CD8-positive, alpha-beta T cell (primary cell): ENCODE measurements at regions of chr12 and their contacts with region 1.

Region 1: DNA sequence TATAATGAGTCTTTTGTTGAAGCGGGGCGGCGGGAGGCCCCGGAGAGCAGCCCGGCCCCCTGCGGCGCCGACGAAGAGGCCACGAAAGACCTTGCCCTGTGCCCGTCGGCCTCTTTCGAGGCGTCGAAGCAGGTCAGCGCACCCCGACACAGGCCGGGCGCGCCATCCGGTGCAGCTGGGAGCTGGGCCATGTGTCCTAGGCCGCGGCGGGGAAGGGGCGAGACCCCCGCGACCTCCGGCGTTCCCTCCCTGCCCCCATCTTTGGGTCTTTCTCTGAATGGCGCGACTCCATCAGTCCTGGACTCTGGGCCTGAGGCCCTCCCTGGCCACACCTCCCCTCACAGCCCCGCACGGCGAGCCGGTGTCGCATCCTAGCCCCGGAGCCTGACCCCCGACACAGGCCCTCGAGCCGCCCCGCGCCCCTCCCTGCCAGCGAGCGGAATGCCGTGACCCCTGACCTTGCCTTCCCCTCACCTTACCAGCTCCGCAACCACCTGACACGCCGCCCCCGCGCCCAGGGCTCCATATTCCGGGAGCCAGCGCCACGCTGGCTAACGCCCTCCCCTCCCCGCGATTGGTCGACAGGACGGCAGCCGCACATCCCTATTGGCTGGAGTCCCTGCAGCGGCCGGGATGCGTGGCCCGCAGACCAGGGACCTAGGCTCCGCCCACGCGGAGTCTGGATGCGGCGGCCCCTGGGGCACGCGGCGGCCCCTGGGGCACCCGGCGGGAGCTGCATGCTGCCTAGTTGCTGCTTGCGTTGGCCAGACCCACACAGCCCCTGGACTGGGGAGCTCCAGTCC is at the start of gene SLC11A2:
- DNase-seq: peak; percentile 75 to 96 (median 90)
- ATAC-seq: peak; percentile 90
- H3K4me3 ChIP-seq: peak within 1 kb of the TSS; percentile 76 to 83
- H3K4me3 Mint-ChIP-seq: peak within 1 kb of the TSS; percentile 98
- H3K27ac ChIP-seq: peak within 1 kb of the TSS; percentile 72 to 80
- H3K27ac Mint-ChIP-seq: peak within 1 kb of the TSS; percentile 99
- H3K4me1 ChIP-seq: peaks cover 41% of the 10 kb centered on the region
- H3K4me1 Mint-ChIP-seq: peaks cover 56% of the 10 kb centered on the region
- H3K27me3 ChIP-seq: no peaks in the 10 kb centered on the region
- H3K27me3 Mint-ChIP-seq: no peaks in the 10 kb centered on the region
- CTCF ChIP-seq: no peak
- total RNA-seq, gene SLC11A2: 35.1 to 43.1 TPM

Region 2: DNA sequence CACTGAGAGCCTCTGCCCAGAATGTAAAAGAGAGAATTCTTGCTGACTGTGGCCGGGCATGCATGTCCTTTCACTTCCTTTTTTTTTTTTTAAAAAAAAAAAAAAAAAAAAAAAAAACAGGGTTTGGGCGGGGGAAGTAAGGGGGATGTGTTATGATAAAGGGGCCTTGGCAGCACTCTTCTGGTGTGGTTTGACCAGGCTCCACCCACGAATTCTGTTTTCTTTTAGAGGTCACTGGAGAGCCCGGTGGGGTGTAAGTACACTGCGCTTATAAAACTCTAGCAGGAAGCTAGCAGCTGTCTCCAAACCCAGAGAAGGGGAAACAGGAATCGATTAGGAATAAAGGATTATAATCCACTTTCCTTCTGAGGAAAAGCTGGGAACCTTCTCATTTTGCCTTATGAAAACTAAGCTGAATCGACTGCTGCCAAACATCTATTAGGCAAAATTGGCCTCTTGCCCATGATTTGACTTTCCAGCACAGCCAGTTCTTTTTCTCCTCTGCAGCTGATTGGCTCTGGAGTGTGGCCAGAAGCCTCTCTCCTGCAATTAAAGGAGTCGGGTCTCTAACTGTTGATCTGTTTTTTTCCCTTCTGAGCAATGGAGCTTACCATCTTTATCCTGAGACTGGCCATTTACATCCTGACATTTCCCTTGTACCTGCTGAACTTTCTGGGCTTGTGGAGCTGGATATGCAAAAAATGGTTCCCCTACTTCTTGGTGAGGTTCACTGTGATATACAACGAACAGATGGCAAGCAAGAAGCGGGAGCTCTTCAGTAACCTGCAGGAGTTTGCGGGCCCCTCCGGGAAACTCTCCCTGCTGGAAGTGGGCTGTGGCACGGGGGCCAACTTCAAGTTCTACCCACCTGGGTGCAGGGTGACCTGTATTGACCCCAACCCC is 101.3 kb before region 1 on chr12:
- CTCF ChIA-PET with region 1: no interaction called
- POLR2A ChIA-PET with region 1: interaction called, 6 read pairs
- intact Hi-C with region 1: loop called in 1 of 2 experiments (anchors 1 kb)
- DNase-seq: peak in 8 of 9 experiments; percentile 16 to 80 (median 44)
- ATAC-seq: peak; percentile 83
- H3K4me3 ChIP-seq: peak overlapping the region; percentile 46 to 55
- H3K4me3 Mint-ChIP-seq: peak overlapping the region; percentile 82
- H3K27ac ChIP-seq: peak overlapping the region in 1 of 2 experiments; percentile 47
- H3K27ac Mint-ChIP-seq: peak overlapping the region; percentile 77
- H3K4me1 ChIP-seq: peaks cover 37% of the 10 kb centered on the region
- H3K4me1 Mint-ChIP-seq: peaks cover 50% of the 10 kb centered on the region
- H3K27me3 ChIP-seq: no peaks in the 10 kb centered on the region
- H3K27me3 Mint-ChIP-seq: no peaks in the 10 kb centered on the region
- CTCF ChIP-seq: no peak

Region 3: GRCh38 chr12:51009056-51009440 is 17.0 kb before region 1 on chr12:
- CTCF ChIA-PET with region 1: interaction called, 25 read pairs
- POLR2A ChIA-PET with region 1: interaction called, 7 read pairs
- intact Hi-C with region 1: loop called (anchors 1 kb)
- DNase-seq: peak; percentile 16 to 76 (median 64)
- ATAC-seq: peak; percentile 99
- H3K4me3 ChIP-seq: peak overlapping the region; percentile 3 to 25
- H3K4me3 Mint-ChIP-seq: peak overlapping the region; percentile 64
- H3K27ac ChIP-seq: peak overlapping the region; percentile 12 to 16
- H3K27ac Mint-ChIP-seq: peak overlapping the region; percentile 84
- H3K4me1 ChIP-seq: peaks cover 18% of the 10 kb centered on the region
- H3K4me1 Mint-ChIP-seq: peaks cover 40% of the 10 kb centered on the region
- H3K27me3 ChIP-seq: no peaks in the 10 kb centered on the region
- H3K27me3 Mint-ChIP-seq: no peaks in the 10 kb centered on the region
- CTCF ChIP-seq: no peak

Region 4: GRCh38 chr12:51083126-51083833 is 57.2 kb after region 1 on chr12 and contains the start of gene CSRNP2:
- CTCF ChIA-PET with region 1: no interaction called
- POLR2A ChIA-PET with region 1: interaction called, 3 read pairs
- intact Hi-C with region 1: loop called (anchors 1 kb)
- DNase-seq: peak; percentile 90 to 97 (median 94)
- ATAC-seq: peak; percentile 99
- H3K4me3 ChIP-seq: peak within 1 kb of the TSS; percentile 88
- H3K4me3 Mint-ChIP-seq: peak within 1 kb of the TSS; percentile 94
- H3K27ac ChIP-seq: peak within 1 kb of the TSS; percentile 61 to 62
- H3K27ac Mint-ChIP-seq: peak within 1 kb of the TSS; percentile 91
- H3K4me1 ChIP-seq: peaks cover 12% of the 10 kb centered on the region
- H3K4me1 Mint-ChIP-seq: peaks cover 36% of the 10 kb centered on the region
- H3K27me3 ChIP-seq: no peaks in the 10 kb centered on the region
- H3K27me3 Mint-ChIP-seq: no peaks in the 10 kb centered on the region
- CTCF ChIP-seq: no peak
- total RNA-seq, gene CSRNP2: 19.5 to 19.9 TPM

Region 5: GRCh38 chr12:51323991-51324930 is 298.2 kb after region 1 on chr12 and contains the start of gene BIN2:
- CTCF ChIA-PET with region 1: no interaction called
- POLR2A ChIA-PET with region 1: no interaction called
- intact Hi-C with region 1: no loop called
- DNase-seq: peak; percentile 39 to 92 (median 78)
- ATAC-seq: peak; percentile 53
- H3K4me3 ChIP-seq: peak within 1 kb of the TSS; percentile 77
- H3K4me3 Mint-ChIP-seq: peak within 1 kb of the TSS; percentile 93
- H3K27ac ChIP-seq: peak within 1 kb of the TSS; percentile 90 to 94
- H3K27ac Mint-ChIP-seq: peak within 1 kb of the TSS; percentile 95
- H3K4me1 ChIP-seq: peaks cover 75% of the 10 kb centered on the region
- H3K4me1 Mint-ChIP-seq: peaks cover 82% of the 10 kb centered on the region
- H3K27me3 ChIP-seq: no peaks in the 10 kb centered on the region
- H3K27me3 Mint-ChIP-seq: no peaks in the 10 kb centered on the region
- CTCF ChIP-seq: no peak
- total RNA-seq, gene BIN2: 115 to 125 TPM

Region 6: GRCh38 chr12:51460519-51460918 is 434.5 kb after region 1 on chr12:
- CTCF ChIA-PET with region 1: no interaction called
- POLR2A ChIA-PET with region 1: no interaction called
- intact Hi-C with region 1: no loop called
- DNase-seq: no peak
- ATAC-seq: no peak
- H3K4me3 ChIP-seq: no peak overlapping the region
- H3K4me3 Mint-ChIP-seq: no peak overlapping the region
- H3K27ac ChIP-seq: no peak overlapping the region
- H3K27ac Mint-ChIP-seq: no peak overlapping the region
- H3K4me1 ChIP-seq: no peaks in the 10 kb centered on the region
- H3K4me1 Mint-ChIP-seq: no peaks in the 10 kb centered on the region
- H3K27me3 ChIP-seq: no peaks in the 10 kb centered on the region
- H3K27me3 Mint-ChIP-seq: no peaks in the 10 kb centered on the region
- CTCF ChIP-seq: no peak